Pancreas (tissue), 10 donors: ENCODE measurements at regions of chr1 and their contacts with region 1.

Region 1: DNA sequence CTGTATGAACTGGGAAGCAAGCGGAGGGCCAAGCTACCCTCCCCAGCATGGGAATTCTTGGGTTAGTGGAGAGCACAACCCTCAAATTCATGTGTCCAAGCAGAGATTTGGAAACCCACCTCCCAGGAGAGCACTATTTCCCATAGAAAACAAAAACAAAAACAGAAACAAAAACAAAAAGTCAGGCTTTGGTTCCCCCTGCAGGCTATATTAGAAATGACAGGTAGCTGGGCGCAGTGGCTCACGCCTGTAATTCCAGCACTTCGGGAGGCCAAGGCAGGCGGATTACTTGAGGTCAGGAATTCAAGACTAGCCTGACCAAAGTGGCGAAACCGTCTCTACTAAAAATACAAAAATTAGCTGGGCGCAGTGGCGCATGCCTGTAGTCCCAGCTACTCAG is 10.8 kb downstream of the MINDY1 start:
- DNase-seq: peak in 1 of 6 donors; percentile 43
- ATAC-seq: peak in 3 of 4 donors; percentile 58 to 79 (median 72)
- H3K4me3 ChIP-seq: no peak overlapping the region
- H3K27ac ChIP-seq: no peak overlapping the region
- H3K4me1 ChIP-seq: no peaks in the 10 kb centered on the region
- H3K27me3 ChIP-seq: no peaks in the 10 kb centered on the region
- CTCF ChIP-seq: peak; percentile 67 to 87 (median 75)

Region 2: DNA sequence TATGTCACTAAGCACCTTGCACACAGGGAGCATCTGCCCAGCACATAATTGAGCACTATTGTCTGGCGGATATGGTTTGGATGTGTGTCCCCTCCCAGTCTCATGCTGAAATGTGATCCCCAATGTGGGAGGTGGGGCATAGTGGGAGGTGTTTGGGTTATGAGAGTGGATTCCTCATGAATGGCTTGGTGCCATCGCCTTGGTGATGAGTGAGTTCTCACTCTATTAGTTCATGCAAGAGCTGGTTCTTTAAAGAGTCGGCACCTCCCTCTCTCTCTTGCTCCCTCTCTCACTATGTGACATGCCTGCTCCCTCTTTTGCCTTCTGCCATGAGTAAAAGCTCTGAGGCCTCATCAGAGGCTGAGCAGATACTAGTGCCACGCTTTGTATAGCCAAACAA is 197.4 kb before region 1 on chr1:
- intact Hi-C with region 1: no loop called
- DNase-seq: no peak
- ATAC-seq: no peak
- H3K4me3 ChIP-seq: no peak overlapping the region
- H3K27ac ChIP-seq: no peak overlapping the region
- H3K4me1 ChIP-seq: no peaks in the 10 kb centered on the region
- H3K27me3 ChIP-seq: no peaks in the 10 kb centered on the region
- CTCF ChIP-seq: no peak

Region 3: GRCh38 chr1:150813058-150813707 is 182.7 kb before region 1 on chr1:
- intact Hi-C with region 1: loop called in 1 of 3 experiments (anchors 10 kb)
- DNase-seq: peak; percentile 26 to 71 (median 60)
- ATAC-seq: peak; percentile 65 to 92 (median 90)
- H3K4me3 ChIP-seq: no peak overlapping the region
- H3K27ac ChIP-seq: no peak overlapping the region
- H3K4me1 ChIP-seq: peaks cover 0 to 4% (median 0%) of the 10 kb centered on the region in 3 donors
- H3K27me3 ChIP-seq: no peaks in the 10 kb centered on the region
- CTCF ChIP-seq: peak in 3 of 4 donors; percentile 35 to 69 (median 58)

Region 4: DNA sequence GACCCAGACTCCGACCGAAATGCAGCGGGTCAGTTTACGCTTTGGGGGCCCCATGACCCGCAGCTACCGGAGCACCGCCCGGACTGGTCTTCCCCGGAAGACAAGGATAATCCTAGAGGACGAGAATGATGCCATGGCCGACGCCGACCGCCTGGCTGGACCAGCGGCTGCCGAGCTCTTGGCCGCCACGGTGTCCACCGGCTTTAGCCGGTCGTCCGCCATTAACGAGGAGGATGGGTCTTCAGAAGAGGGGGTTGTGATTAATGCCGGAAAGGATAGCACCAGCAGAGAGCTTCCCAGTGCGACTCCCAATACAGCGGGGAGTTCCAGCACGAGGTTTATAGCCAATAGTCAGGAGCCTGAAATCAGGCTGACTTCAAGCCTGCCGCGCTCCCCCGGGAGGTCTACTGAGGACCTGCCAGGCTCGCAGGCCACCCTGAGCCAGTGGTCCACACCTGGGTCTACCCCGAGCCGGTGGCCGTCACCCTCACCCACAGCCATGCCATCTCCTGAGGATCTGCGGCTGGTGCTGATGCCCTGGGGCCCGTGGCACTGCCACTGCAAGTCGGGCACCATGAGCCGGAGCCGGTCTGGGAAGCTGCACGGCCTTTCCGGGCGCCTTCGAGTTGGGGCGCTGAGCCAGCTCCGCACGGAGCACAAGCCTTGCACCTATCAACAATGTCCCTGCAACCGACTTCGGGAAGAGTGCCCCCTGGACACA is 52.2 kb after region 1 on chr1:
- intact Hi-C with region 1: no loop called
- DNase-seq: peak; percentile 66 to 91 (median 78)
- ATAC-seq: peak; percentile 86 to 92 (median 88)
- H3K4me3 ChIP-seq: peak overlapping the region; percentile 52 to 86 (median 70)
- H3K27ac ChIP-seq: peak overlapping the region; percentile 63 to 79 (median 71)
- H3K4me1 ChIP-seq: peaks cover 0 to 13% (median 4%) of the 10 kb centered on the region in 3 donors
- H3K27me3 ChIP-seq: no peaks in the 10 kb centered on the region
- CTCF ChIP-seq: no peak